ENCODE measurements at regions of chr14 and their contacts with region 1.

Region 1: GRCh38 chr14:85195872-85196477 is 334.0 kb upstream of the FLRT2 start:
- DNase-seq: no peak
- ATAC-seq: no peak
- H3K4me3 ChIP-seq: no peak overlapping the region
- H3K27ac ChIP-seq: no peak overlapping the region
- H3K4me1 ChIP-seq: no peaks in the 10 kb centered on the region
- H3K27me3 ChIP-seq: no peaks in the 10 kb centered on the region
- CTCF ChIP-seq: peak; percentile 25
- EP300 ChIP-seq: no peak
- POLR2A ChIP-seq: no peak
- RAD21 ChIP-seq: no peak

Region 2: GRCh38 chr14:85178864-85179263 is 17.1 kb before region 1 on chr14:
- CTCF ChIA-PET with region 1: no interaction called
- POLR2A ChIA-PET with region 1: no interaction called
- in situ Hi-C with region 1: no loop called
- intact Hi-C with region 1: no loop called
- DNase-seq: no peak
- ATAC-seq: no peak
- H3K4me3 ChIP-seq: no peak overlapping the region
- H3K27ac ChIP-seq: no peak overlapping the region
- H3K4me1 ChIP-seq: no peaks in the 10 kb centered on the region
- H3K27me3 ChIP-seq: no peaks in the 10 kb centered on the region
- CTCF ChIP-seq: no peak
- EP300 ChIP-seq: no peak
- POLR2A ChIP-seq: no peak
- RAD21 ChIP-seq: no peak

Region 3: DNA sequence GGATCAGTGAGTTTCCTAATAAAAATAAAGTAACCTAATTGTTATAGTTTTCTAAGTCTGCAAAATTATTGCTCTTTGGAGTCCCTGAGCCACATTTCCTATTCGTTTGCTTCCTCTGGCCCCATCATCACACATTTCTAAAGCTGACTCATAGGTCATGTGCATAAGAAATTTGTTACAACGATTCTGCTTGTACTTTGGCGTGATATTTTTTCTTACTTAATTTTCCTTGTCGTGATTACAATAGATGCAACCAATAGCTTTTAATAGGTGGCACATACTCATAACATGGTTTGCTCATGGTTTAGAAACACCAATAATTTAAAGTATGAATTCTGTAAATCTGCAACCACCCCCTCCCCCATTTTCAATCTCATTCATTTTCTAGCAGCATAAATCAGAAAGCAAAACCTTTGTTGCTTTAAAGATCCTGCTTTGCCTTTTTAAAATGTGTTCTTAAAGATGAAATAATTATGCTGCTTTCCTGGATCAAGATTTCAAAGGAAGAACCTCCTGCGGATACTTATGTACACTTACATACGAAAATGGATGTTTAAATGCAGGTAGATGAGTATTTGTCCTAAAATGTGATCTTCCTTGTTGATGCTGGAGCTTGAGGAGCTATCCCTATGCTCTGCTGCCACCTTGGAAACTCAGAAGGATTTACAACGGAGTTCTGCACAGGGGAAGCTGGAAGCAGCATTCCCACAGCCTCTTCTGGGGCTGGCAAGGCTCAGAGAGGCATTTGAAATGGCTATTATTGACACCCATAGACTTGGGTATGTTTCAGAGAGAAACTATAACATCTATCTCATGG is 332.3 kb after region 1 on chr14:
- CTCF ChIA-PET with region 1: no interaction called
- POLR2A ChIA-PET with region 1: no interaction called
- in situ Hi-C with region 1: no loop called
- intact Hi-C with region 1: loop called (anchors 10 kb)
- DNase-seq: peak; percentile 41
- ATAC-seq: peak; percentile 84
- H3K4me3 ChIP-seq: no peak overlapping the region; a peak in 1 of 6 replicates
- H3K27ac ChIP-seq: no peak overlapping the region
- H3K4me1 ChIP-seq: no peaks in the 10 kb centered on the region
- H3K27me3 ChIP-seq: peaks cover 4 to 45% of the 10 kb centered on the region in 2 experiments
- CTCF ChIP-seq: peak; percentile 73
- EP300 ChIP-seq: no peak
- POLR2A ChIP-seq: no peak
- RAD21 ChIP-seq: peak; percentile 71

Region 4: GRCh38 chr14:85613496-85613895 is 417.5 kb after region 1 on chr14:
- CTCF ChIA-PET with region 1: interaction called, 3 read pairs
- POLR2A ChIA-PET with region 1: no interaction called
- in situ Hi-C with region 1: no loop called
- intact Hi-C with region 1: loop called (anchors 5 kb)
- DNase-seq: no peak
- ATAC-seq: no peak
- H3K4me3 ChIP-seq: no peak overlapping the region
- H3K27ac ChIP-seq: no peak overlapping the region
- H3K4me1 ChIP-seq: no peaks in the 10 kb centered on the region
- H3K27me3 ChIP-seq: no peaks in the 10 kb centered on the region
- CTCF ChIP-seq: no peak
- EP300 ChIP-seq: no peak
- POLR2A ChIP-seq: no peak
- RAD21 ChIP-seq: no peak

Measured in HepG2 (cell line).